ENCODE measurements at regions of chr3 and their contacts with region 1.

Region 1: GRCh38 chr3:68876112-68876713 is 56.1 kb downstream of the TAFA4 start:
- DNase-seq: peak; percentile 8 to 14
- H3K4me3 ChIP-seq: no peak overlapping the region
- H3K27ac ChIP-seq: no peak overlapping the region
- H3K4me1 ChIP-seq: no peaks in the 10 kb centered on the region
- H3K27me3 ChIP-seq: no peaks in the 10 kb centered on the region
- CTCF ChIP-seq: peak; percentile 57 to 83 (median 72)
- POLR2A ChIP-seq: no peak

Region 2: GRCh38 chr3:67113802-67114407 is 1762.3 kb before region 1 on chr3:
- intact Hi-C with region 1: loop called (anchors 10 kb)
- DNase-seq: peak; percentile 69 to 75
- H3K4me3 ChIP-seq: no peak overlapping the region
- H3K27ac ChIP-seq: no peak overlapping the region
- H3K4me1 ChIP-seq: no peaks in the 10 kb centered on the region
- H3K27me3 ChIP-seq: no peaks in the 10 kb centered on the region
- CTCF ChIP-seq: peak; percentile 36 to 85 (median 66)
- POLR2A ChIP-seq: no peak

Region 3: GRCh38 chr3:68328049-68328448 is 548.2 kb before region 1 on chr3:
- intact Hi-C with region 1: no loop called
- DNase-seq: no peak
- H3K4me3 ChIP-seq: no peak overlapping the region
- H3K27ac ChIP-seq: no peak overlapping the region
- H3K4me1 ChIP-seq: no peaks in the 10 kb centered on the region
- H3K27me3 ChIP-seq: no peaks in the 10 kb centered on the region
- CTCF ChIP-seq: no peak
- POLR2A ChIP-seq: no peak

Measured in thyroid gland (tissue), 4 donors.